ENCODE measurements at regions of chr6 and their contacts with region 1.

Region 1: DNA sequence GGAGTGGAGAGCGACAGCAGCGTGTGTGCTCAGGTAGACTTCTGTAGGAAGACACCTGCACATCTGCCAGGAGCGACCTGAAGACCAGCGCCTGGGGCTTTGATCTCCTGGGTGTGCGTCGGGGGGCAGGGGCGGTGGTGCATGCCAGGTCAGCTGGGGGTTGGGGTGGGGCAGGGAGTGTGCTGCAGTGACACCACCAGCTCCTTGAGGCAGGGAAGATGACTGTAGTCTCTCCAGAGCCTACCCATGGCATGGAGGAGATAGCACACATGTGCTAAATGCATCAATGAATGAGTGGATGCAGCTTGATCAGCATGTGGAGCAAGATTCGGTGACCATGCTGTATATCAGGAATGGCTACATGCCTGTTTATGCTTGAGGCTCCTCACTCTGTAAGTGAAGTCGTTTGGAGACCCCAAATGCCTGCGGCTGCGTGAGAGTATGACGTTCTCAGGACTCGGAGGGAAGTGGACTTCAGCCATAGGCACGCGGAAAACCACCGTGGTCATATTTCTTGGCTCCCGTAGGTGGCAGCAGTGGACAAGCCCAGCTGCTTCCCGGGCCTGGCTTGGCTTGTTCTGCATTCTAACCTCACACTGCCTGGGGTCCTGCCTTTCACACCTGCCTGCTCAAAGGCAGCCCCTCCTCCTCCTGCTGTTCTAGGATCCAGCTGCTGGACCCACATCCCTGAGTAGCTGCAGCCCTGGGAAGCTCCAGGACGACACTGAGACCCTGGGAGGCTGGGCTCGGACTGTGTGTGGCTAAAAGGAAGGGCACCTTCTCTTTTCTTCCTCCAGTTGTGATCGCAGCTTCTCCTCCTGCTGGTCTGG is 39.4 kb upstream of the KCNK16 start:
- DNase-seq: peak; percentile 83
- ATAC-seq: peak; percentile 96
- H3K4me3 Mint-ChIP-seq: no peak overlapping the region
- H3K27ac Mint-ChIP-seq: no peak overlapping the region
- H3K4me1 Mint-ChIP-seq: peaks cover 12% of the 10 kb centered on the region
- H3K27me3 Mint-ChIP-seq: peaks cover 12% of the 10 kb centered on the region
- CTCF ChIP-seq: peak; percentile 64; the same call in 1 of the 2 replicates

Region 2: DNA sequence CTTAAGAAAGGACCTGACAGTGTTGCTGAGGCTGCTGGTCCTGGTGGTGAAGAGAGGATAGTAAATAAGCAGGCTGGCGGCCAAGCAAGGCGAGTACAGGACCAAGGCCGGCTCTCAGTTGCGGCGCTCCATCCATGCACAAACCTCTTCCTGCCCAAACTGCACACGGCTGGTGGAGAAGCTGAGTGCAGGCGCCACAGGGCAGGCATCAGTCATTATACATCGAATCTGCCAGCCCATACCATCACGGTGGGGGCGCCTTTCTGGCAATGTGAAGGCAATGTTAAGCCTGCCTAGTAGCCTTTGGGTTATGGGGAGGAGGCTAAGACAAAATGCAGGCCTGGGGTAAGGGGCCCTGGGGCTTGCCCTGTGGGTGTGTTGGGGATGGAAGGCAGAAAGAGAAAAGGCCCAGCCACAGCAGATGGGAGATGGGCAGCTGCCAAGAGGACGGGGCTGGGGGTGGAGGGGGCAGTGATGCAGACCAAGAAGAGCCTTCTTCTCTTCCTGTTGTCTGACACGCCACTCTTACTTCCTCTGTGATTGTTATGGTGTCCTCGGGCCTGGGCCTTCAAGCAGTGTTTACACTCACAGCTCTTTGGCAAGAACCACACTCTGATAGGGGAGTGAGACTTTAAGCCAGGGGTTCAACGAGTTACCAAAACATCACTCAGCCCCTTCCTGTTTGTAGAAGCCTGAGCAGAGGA is 19.0 kb before region 1 on chr6:
- CTCF ChIA-PET with region 1: interaction called, 12 read pairs
- POLR2A ChIA-PET with region 1: no interaction called
- DNase-seq: no peak
- ATAC-seq: no peak
- H3K4me3 Mint-ChIP-seq: no peak overlapping the region
- H3K27ac Mint-ChIP-seq: no peak overlapping the region
- H3K4me1 Mint-ChIP-seq: peaks cover 34% of the 10 kb centered on the region
- H3K27me3 Mint-ChIP-seq: no peaks in the 10 kb centered on the region
- CTCF ChIP-seq: no peak

Region 3: DNA sequence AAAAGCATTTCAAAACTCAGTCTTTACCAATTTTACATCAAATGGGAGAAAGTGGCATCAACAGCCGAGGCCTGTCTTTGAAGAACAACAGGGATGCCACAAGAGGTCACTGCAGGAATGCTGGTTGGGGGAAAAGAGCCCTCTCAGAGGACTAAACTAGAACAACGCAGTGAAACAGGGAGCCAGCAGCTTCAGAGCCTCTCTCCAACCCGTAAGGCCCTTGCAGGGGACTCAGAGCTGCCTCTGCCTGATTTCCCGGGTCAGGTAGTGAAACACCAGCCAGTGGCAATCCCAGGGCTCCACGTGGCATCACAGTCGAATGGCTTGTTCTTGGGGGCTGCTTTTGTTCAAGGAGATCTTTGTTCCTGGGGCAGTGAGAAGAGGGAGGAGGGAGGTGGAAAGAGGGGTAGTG is 15.7 kb after region 1 on chr6:
- CTCF ChIA-PET with region 1: interaction called, 23 read pairs
- POLR2A ChIA-PET with region 1: no interaction called
- DNase-seq: peak; percentile 76
- ATAC-seq: peak; percentile 99
- H3K4me3 Mint-ChIP-seq: no peak overlapping the region
- H3K27ac Mint-ChIP-seq: no peak overlapping the region
- H3K4me1 Mint-ChIP-seq: no peaks in the 10 kb centered on the region; the same call in 1 of the 2 replicates
- H3K27me3 Mint-ChIP-seq: no peaks in the 10 kb centered on the region
- CTCF ChIP-seq: peak; percentile 45

Region 4: DNA sequence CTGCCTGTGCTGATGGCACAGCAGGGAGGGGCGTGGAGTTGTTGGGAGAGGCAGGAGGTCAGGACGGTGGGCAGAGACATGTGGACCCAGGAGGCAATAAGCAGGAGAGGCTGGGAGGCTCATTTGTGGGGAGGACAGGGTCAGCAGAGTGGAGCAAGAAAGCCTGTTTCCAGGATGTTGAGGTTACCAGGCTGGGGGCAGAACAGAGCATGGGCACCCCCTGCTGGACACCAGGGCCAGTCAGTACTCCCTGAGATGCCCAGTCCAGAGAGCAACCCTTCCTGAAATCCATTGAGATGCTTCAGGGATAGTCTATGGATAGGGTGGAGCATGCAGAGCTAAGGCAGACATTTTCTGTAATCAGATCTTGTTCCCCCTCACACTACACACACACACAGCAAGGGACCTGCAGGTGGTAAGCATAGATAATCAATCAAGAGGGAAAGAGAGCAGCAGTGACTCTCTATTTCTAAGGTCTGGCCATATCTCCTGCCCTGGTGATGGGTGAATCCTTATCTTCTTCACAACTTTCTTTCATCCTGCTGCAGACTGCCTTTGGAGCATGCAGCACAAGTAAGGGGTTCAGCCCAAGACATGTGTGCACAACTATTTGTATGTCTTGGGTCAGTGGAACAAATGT is 530.7 kb after region 1 on chr6:
- CTCF ChIA-PET with region 1: interaction called, 14 read pairs
- POLR2A ChIA-PET with region 1: no interaction called
- DNase-seq: peak; percentile 74
- ATAC-seq: peak; percentile 91
- H3K4me3 Mint-ChIP-seq: no peak overlapping the region
- H3K27ac Mint-ChIP-seq: no peak overlapping the region
- H3K4me1 Mint-ChIP-seq: peaks cover 8% of the 10 kb centered on the region
- H3K27me3 Mint-ChIP-seq: no peaks in the 10 kb centered on the region; the same call in 1 of the 2 replicates
- CTCF ChIP-seq: peak; percentile 60